Activated CD8-positive, alpha-beta T cell treated with anti-CD3 and anti-CD28 coated beads, Interleukin-2, amount 10 ng/mL, durations not matched to agents 7 days and 5 days (primary cell): ENCODE measurements at regions of chr2 and their contacts with region 1.

Region 1: GRCh38 chr2:44479122-44479887 is 117.6 kb downstream of the CAMKMT start:
- DNase-seq: peak; percentile 64
- ATAC-seq: peak; percentile 100
- H3K4me3 Mint-ChIP-seq: no peak overlapping the region
- H3K27ac Mint-ChIP-seq: no peak overlapping the region
- H3K4me1 Mint-ChIP-seq: peaks cover 3% of the 10 kb centered on the region
- H3K27me3 Mint-ChIP-seq: no peaks in the 10 kb centered on the region

Region 2: DNA sequence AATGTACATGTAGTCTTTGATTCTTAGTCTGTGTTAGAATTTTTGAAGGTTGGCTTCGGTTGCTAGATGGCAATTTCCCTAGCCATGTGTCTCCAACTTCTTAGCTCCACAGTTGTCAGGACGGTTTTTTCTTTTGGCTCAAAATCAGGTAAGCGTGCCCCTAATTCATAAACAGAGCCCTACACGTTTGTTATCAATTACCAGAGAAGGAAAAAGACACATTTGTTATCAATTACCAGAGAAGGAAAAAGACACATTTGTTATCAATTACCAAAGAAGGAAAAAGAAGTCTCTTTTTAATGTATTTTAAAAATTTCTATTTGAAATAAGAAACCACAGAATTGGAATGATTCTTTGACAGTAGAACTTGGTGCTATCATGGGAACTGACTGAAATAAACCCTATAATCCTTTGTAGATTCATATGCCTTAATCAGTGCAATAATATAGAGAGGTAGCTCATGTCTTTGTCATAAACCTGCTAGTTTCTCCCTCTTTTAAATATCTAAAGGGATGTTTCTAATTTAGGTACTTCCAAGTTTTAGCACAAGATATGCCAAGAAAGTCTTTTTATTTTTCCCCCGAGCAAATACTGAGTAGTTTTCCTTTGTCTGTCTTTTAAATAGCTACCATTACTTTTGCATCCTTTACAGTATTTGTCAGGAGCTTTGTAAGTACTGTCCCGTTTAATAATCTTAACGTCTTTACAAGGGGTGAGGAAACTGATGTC is 81.7 kb before region 1 on chr2:
- CTCF ChIA-PET with region 1: interaction called, 17 read pairs
- POLR2A ChIA-PET with region 1: no interaction called
- DNase-seq: no peak
- ATAC-seq: no peak
- H3K4me3 Mint-ChIP-seq: no peak overlapping the region
- H3K27ac Mint-ChIP-seq: no peak overlapping the region
- H3K4me1 Mint-ChIP-seq: peaks cover 4% of the 10 kb centered on the region
- H3K27me3 Mint-ChIP-seq: no peaks in the 10 kb centered on the region

Region 3: GRCh38 chr2:44462934-44463849 is 16.1 kb before region 1 on chr2:
- CTCF ChIA-PET with region 1: interaction called, 41 read pairs
- POLR2A ChIA-PET with region 1: no interaction called
- DNase-seq: no peak
- ATAC-seq: no peak
- H3K4me3 Mint-ChIP-seq: no peak overlapping the region
- H3K27ac Mint-ChIP-seq: no peak overlapping the region
- H3K4me1 Mint-ChIP-seq: no peaks in the 10 kb centered on the region
- H3K27me3 Mint-ChIP-seq: no peaks in the 10 kb centered on the region

Region 4: DNA sequence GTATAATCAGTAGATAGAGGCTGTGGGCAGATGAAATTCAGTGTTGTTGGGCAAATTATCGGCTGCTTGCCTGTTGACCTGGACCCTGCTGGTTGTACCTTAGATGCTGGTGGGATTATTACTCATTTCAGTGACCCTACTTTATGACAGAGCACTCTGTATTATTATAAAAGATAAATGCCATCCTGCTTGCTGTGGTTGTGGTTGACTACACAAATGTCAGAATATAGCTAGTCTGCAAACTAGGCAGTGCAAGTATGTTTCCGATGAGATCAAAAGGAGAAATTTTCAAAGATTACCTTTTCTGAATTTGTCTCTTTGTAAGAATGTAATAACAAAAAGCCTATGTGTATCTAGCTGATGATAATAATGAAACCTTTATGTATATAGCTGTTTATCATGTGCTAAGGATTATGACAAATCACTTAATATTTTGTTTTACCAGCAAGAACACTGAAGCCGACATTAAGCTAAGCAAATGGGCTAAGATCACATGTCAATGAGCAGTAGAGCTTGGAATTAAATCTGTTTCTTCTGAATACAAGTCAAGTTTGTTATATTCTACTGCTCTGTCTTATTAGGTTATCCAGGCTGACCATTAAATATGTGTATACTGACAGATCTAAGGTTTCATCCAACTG is 101.7 kb after region 1 on chr2:
- CTCF ChIA-PET with region 1: interaction called, 12 read pairs
- POLR2A ChIA-PET with region 1: no interaction called
- DNase-seq: no peak
- ATAC-seq: peak; percentile 33
- H3K4me3 Mint-ChIP-seq: no peak overlapping the region
- H3K27ac Mint-ChIP-seq: no peak overlapping the region
- H3K4me1 Mint-ChIP-seq: peaks cover 40% of the 10 kb centered on the region
- H3K27me3 Mint-ChIP-seq: no peaks in the 10 kb centered on the region

Region 5: DNA sequence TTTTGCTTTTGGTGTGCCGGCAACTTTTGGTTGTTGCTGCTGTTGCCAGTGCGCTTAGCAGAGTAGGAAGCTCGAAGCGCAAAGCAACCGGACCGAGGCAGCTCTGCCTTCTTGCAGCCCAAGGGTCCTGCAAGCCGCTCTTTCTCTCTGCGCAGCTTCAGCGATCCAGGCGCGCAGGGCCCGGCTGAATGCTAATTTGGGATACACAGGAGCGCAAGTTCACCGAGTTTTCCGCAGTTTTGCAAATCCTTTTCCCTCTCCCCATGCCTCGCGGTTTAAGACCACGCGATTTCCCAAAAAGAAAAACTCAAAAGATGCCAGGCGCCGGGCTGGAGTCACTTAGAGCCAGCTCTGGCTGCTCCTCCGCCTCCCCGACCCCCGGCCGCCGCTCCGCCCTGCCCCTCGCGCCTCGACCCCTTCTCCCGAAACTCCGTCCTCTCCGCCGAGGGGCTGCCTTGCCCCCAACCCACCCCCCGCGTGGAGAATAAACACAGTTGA is 448.7 kb after region 1 on chr2:
- CTCF ChIA-PET with region 1: interaction called, 12 read pairs
- POLR2A ChIA-PET with region 1: no interaction called
- DNase-seq: no peak
- ATAC-seq: no peak
- H3K4me3 Mint-ChIP-seq: no peak overlapping the region
- H3K27ac Mint-ChIP-seq: no peak overlapping the region
- H3K4me1 Mint-ChIP-seq: peaks cover 14% of the 10 kb centered on the region
- H3K27me3 Mint-ChIP-seq: peaks cover 73% of the 10 kb centered on the region